HAP-1 (cell line): ENCODE measurements at regions of chr3 and their contacts with region 1.

Region 1: GRCh38 chr3:72818092-72818773 is 30.0 kb downstream of the SHQ1 start:
- DNase-seq: peak in 1 of 2 experiments; percentile 41
- H3K4me3 ChIP-seq: no peak overlapping the region
- H3K4me1 ChIP-seq: no peaks in the 10 kb centered on the region
- H3K27me3 ChIP-seq: no peaks in the 10 kb centered on the region

Region 2: GRCh38 chr3:71955240-71956068 is 862.8 kb before region 1 on chr3:
- in situ Hi-C with region 1: loop called (anchors 25 kb)
- DNase-seq: peak; percentile 69 to 85
- H3K4me3 ChIP-seq: no peak overlapping the region
- H3K4me1 ChIP-seq: no peaks in the 10 kb centered on the region
- H3K27me3 ChIP-seq: no peaks in the 10 kb centered on the region